BJ (cell line): ENCODE measurements at regions of chr12 and their contacts with region 1.

Region 1: DNA sequence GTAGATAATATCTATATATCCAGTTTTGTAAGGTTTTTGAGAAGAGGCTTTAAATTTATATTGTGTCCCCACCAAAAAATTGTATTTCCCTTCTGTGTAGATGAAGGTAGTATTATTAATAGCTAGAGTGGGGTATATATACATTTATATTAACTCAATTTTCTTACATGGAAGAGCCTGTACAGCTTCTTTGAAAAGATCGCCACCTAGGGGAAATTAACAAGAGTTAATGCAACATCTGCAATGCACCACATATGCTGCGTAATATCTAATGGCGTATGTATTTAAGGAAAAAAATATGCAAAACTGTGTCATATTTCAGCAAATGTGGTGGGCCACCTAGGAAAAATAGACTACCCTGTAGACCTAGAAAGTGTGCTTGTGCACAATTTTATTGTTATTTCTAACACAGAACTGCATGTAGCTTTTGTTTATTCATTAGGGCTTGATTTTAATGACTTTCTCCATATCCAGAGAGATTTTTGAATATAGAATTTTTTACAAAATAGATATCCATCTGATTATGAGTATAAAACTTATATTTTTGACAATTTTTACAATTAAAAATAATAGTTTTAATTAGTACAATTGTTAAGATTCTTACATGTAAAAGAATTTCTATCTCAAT is 14.0 kb downstream of the CCER1 start:
- DNase-seq: no peak
- H3K4me3 ChIP-seq: no peak overlapping the region
- H3K27me3 ChIP-seq: no peaks in the 10 kb centered on the region
- CTCF ChIP-seq: peak; percentile 71

Region 2: GRCh38 chr12:90922145-90922627 is 18.8 kb before region 1 on chr12:
- CTCF ChIA-PET with region 1: interaction called, 11 read pairs
- POLR2A ChIA-PET with region 1: no interaction called
- DNase-seq: no peak
- H3K4me3 ChIP-seq: no peak overlapping the region
- H3K27me3 ChIP-seq: no peaks in the 10 kb centered on the region
- CTCF ChIP-seq: no peak

Region 3: GRCh38 chr12:90953956-90954421 is 13.0 kb after region 1 on chr12:
- CTCF ChIA-PET with region 1: interaction called, 11 read pairs
- POLR2A ChIA-PET with region 1: no interaction called
- DNase-seq: no peak
- H3K4me3 ChIP-seq: no peak overlapping the region
- H3K27me3 ChIP-seq: no peaks in the 10 kb centered on the region
- CTCF ChIP-seq: peak; percentile 18; the same call in 1 of the 2 replicates

Region 4: GRCh38 chr12:90959538-90960139 is 18.7 kb after region 1 on chr12:
- CTCF ChIA-PET with region 1: interaction called, 11 read pairs
- POLR2A ChIA-PET with region 1: no interaction called
- DNase-seq: no peak
- H3K4me3 ChIP-seq: no peak overlapping the region
- H3K27me3 ChIP-seq: no peaks in the 10 kb centered on the region
- CTCF ChIP-seq: peak; percentile 78

Region 5: GRCh38 chr12:91355150-91356006 is 414.4 kb after region 1 on chr12:
- CTCF ChIA-PET with region 1: interaction called, 11 read pairs
- POLR2A ChIA-PET with region 1: no interaction called
- DNase-seq: no peak
- H3K4me3 ChIP-seq: no peak overlapping the region
- H3K27me3 ChIP-seq: no peaks in the 10 kb centered on the region
- CTCF ChIP-seq: peak; percentile 91

Region 6: GRCh38 chr12:91367234-91367849 is 426.4 kb after region 1 on chr12:
- CTCF ChIA-PET with region 1: interaction called, 11 read pairs
- POLR2A ChIA-PET with region 1: no interaction called
- DNase-seq: no peak
- H3K4me3 ChIP-seq: no peak overlapping the region
- H3K27me3 ChIP-seq: no peaks in the 10 kb centered on the region
- CTCF ChIP-seq: peak; percentile 62